ENCODE measurements at regions of chr21 and their contacts with region 1.

Region 1: DNA sequence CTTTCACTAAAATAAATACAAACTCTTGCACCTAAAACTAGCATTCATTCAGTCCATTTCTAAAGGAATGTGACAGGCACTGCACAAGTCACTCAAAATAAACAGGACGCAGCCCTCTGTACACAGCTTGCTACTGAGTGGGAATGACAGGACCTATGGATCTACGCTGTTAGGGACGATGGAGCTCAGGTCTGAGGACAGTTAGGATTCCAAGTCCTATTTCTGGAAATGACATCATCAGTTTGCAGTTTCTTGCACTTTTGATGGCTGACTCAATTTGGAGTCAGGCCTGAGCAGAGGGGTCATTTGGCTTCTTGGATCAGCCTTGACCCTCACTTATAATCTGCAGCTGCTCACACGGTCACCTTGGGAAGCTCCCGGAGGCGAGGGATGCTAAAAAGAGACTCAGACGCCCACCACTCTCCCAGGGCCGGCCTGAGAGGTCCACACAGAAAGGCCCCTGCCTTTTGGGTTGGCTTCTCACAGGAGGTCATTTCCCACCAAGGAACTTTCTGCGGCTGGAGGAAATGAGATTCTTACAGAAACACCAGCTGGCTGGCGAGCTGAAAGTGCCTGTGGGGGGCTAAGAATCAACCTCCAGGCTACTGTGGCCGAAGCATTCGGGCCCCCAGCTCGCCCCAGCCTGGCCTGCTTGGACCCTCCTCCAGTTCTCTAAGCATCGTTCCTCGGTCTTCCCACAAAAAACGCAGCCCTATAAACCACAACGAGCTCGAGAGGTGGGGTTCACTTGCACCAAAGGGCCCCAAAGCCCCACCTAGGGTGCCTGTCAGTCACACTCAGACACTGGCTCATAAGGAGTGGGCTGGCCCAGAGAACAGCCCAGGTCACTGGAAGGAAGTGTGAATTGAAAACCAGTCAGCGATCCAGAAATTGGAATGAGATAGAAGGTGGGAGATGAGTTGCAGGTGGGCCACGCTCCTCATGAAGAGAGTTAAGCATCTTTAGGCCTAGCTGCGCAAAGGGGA is 8.9 kb upstream of the PDE9A start:
- DNase-seq: no peak
- ATAC-seq: peak; percentile 37
- H3K4me3 ChIP-seq: no peak overlapping the region
- H3K27ac ChIP-seq: no peak overlapping the region
- H3K4me1 ChIP-seq: peaks cover 0 to 9% of the 10 kb centered on the region in 2 experiments; a peak in 4 of 5 replicates
- H3K27me3 ChIP-seq: peaks cover 40 to 64% of the 10 kb centered on the region in 2 experiments
- CTCF ChIP-seq: no peak
- EP300 ChIP-seq: no peak; the same call in 1 of the 2 replicates
- POLR2A ChIP-seq: no peak
- RAD21 ChIP-seq: no peak

Region 2: DNA sequence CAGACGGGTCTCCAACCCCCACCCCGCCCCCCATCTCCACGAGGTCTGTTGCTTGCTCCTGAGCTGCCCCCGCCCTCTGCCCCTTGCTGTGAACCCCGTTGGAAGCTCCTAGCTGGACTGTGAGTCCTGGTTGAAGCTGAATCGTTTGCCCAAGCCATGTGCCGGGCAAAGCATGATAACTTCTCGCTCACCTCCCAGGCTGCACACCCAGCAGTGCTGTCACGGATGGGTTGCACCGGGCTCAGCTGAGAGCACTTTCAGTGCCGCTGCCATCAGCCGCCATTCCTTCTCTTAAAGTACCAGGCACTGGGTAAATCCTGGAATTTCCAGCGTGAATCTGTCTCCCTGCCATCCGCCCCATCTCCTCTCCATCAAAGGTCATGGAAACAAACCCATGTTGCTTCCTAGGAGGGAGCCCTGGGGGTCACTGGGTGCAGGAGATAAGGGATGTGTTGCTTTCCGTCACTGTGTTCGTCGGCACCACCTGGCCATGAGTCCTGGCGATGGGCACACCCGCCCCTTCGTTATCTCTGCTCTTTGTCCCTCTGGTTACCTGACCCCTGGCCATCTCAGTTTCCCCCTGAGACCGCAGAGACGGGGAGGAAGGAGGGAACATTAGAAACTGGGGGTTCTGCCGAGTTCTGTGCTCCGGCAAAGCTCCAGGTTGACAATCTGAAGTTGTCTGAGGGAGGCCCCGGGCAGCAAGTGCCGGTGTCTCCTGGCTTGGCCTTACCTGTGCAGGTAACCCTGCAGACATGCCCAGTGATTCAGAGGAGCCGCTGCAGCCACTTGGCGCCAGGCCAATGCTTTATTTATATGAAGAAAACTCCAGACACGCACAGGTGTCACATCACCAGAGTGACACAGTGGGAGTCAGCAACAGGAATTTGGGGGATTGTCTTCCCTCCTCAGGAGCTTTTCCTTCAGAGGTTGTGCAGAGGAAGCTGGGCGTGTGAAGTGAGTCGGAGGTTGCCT is 11.6 kb after region 1 on chr21:
- CTCF ChIA-PET with region 1: no interaction called
- POLR2A ChIA-PET with region 1: interaction called, 10 read pairs
- in situ Hi-C with region 1: no loop called
- intact Hi-C with region 1: no loop called
- DNase-seq: no peak
- ATAC-seq: no peak
- H3K4me3 ChIP-seq: no peak overlapping the region
- H3K27ac ChIP-seq: no peak overlapping the region
- H3K4me1 ChIP-seq: peaks cover 0 to 14% of the 10 kb centered on the region in 2 experiments; a peak in 2 of 5 replicates
- H3K27me3 ChIP-seq: peaks cover 77 to 89% of the 10 kb centered on the region in 2 experiments
- CTCF ChIP-seq: no peak
- EP300 ChIP-seq: no peak
- POLR2A ChIP-seq: no peak
- RAD21 ChIP-seq: no peak

Region 3: GRCh38 chr21:42806509-42807140 is 162.1 kb after region 1 on chr21:
- CTCF ChIA-PET with region 1: no interaction called
- POLR2A ChIA-PET with region 1: no interaction called
- in situ Hi-C with region 1: no loop called
- intact Hi-C with region 1: no loop called
- DNase-seq: no peak
- ATAC-seq: no peak
- H3K4me3 ChIP-seq: no peak overlapping the region
- H3K27ac ChIP-seq: no peak overlapping the region
- H3K4me1 ChIP-seq: no peaks in the 10 kb centered on the region
- H3K27me3 ChIP-seq: peaks cover 44 to 48% of the 10 kb centered on the region in 2 experiments
- CTCF ChIP-seq: no peak
- EP300 ChIP-seq: no peak
- POLR2A ChIP-seq: no peak
- RAD21 ChIP-seq: no peak